ENCODE measurements at regions of chr15 and their contacts with region 1.

Region 1: DNA sequence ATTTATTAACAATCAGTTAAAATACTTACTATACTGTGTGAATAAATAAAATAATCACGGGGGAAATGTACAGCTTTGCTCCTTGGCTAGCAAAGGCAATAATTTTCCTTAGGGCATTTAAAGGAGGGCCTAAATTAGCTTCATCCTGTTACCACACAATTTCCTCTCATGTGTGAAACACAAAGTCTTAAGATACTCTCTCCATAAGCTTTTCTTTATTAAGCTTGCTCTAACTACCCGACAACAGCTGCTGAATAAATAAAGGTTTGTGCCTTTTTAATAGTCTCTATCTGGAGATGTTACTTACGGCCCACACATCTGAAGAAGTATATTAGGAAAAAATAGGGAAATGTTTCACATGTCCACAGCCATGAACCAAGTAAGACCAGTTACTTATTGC is 29.7 kb downstream of the ZNF106 start:
- DNase-seq: no peak
- H3K4me3 ChIP-seq: no peak overlapping the region
- H3K27ac ChIP-seq: no peak overlapping the region
- H3K27me3 ChIP-seq: no peaks in the 10 kb centered on the region
- CTCF ChIP-seq: no peak

Region 2: GRCh38 chr15:42184296-42184695 is 277.0 kb before region 1 on chr15:
- CTCF ChIA-PET with region 1: no interaction called
- POLR2A ChIA-PET with region 1: interaction called, 11 read pairs
- DNase-seq: no peak
- H3K4me3 ChIP-seq: no peak overlapping the region
- H3K27ac ChIP-seq: no peak overlapping the region
- H3K27me3 ChIP-seq: no peaks in the 10 kb centered on the region
- CTCF ChIP-seq: no peak

Measured in AG04450 (cell line).